Heart left ventricle (tissue), 16 donors: ENCODE measurements at regions of chr18 and their contacts with region 1.

Region 1: DNA sequence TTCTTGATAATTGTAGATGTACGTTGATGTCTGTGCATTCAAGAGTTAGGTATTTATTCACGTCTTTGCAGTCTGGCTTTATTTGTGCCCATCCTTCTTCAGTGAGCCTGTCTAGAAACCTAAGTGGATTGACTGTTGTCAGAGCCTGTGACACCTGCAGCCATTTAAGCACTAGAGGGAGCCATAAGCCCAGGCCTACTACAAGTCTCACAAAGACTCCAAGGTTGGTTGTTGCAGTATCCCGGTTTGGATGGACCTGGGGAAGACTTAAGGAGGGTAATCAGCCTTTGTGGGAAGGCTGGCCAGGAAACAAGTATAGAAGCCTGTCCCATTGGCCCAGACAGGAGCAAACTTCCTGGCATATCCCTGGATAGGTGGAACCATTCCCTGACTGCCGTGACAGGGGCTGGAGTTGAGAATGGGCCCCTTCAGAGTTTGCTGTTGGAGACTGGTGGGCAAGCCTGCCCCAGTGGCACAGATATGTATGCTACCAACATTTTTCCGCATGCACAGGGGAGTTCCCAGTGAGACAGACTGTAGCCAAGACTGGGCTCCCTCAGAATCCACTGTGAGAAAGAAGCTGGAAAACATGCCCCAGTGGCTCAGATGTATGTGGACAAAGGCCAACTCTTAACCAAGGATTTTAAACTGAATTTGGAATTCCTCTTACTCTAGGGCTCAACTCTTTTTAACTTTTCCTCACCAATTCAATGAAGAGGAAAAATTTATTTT is 9.3 kb upstream of the LRRC30 start:
- DNase-seq: peak in 4 of 5 donors; percentile 40 to 49 (median 42)
- ATAC-seq: peak; percentile 64 to 91 (median 90)
- H3K4me3 ChIP-seq: no peak overlapping the region
- H3K27ac ChIP-seq: no peak overlapping the region
- H3K4me1 ChIP-seq: no peaks in the 10 kb centered on the region
- H3K27me3 ChIP-seq: no peaks in the 10 kb centered on the region
- CTCF ChIP-seq: peak; percentile 62 to 79 (median 72)
- POLR2A ChIP-seq: no peak

Region 2: DNA sequence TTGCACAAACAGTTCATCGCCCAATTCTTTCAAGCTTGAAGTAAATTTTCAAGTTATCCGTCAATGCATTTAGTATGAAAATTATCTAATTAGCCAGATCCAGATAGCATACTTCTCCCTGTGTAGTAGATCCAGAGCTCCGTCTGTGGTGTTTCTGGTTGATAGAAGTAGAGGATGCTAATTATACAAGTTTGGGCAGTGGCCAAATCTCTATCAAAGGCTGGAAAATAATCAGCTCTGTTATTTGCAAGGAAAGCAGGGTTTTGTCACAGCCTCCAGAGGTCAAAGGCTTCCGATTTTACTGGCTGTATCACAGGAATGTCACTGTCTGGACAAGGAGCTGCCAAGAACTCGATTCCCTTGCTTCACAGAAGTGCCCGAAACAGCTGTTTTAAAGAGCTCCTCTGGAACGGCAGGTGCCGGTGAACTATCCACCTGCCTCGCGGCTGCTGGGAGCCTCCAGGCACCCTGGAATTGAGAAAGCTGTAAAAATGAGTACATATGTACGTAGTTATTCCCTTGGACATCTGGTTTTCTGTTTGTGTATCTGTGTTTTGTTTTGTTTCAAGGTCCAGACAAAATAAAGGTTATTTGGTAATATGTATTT is 38.0 kb after region 1 on chr18:
- intact Hi-C with region 1: loop called in 1 of 10 experiments (anchors 5 kb)
- DNase-seq: no peak
- ATAC-seq: peak in 3 of 4 donors; percentile 21 to 27 (median 23)
- H3K4me3 ChIP-seq: no peak overlapping the region
- H3K27ac ChIP-seq: peak overlapping the region in 4 of 12 donors; percentile 7 to 46 (median 28)
- H3K4me1 ChIP-seq: peaks cover 0 to 31% (median 12%) of the 10 kb centered on the region in 12 donors
- H3K27me3 ChIP-seq: no peaks in the 10 kb centered on the region
- CTCF ChIP-seq: no peak
- POLR2A ChIP-seq: no peak

Region 3: DNA sequence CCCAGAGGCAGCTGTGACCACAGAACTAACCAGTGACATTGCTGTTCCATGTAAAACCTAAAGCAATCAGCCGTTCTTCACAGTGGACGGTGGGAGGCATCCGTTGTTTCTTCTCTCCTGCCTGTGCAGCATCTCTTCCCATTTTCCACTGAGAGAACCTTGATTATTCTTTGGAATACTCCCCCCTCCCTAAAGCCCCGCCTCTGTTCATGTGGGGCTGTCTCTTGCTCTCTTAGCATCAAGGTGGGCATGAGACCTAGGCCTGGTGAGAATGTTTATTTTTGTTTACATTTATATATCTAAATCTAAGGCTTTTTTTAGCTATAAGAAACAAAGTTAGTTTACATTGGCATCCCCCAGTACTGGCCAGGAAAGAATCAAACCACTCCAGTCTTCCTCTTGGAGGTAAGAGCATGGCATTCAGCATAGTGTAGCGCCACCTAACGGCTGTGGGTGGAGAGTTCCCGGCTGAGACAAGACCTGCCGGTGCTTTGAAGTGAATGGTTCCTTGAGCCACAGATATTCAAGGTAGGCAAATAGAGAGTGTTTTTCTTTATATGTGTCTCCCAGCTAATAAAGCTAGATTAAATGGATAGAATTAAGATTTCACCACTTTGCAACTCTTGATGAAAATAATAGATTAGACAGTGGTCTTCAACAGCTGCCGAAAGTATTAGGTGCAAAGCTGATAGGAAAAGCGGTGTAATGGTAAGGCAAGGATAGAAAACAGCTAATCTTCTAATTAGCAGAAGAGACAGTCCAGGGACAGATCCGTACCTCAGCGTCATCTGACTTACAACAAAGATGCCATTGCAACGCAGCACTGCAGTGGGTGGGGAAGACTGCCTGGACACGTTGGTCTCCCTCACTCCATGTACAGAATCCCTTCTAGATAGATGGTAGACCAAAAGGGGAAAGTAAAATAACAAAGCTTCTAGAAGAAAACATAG is 1168.1 kb after region 1 on chr18:
- intact Hi-C with region 1: loop called in 1 of 10 experiments (anchors 10 kb)
- DNase-seq: peak in 4 of 5 donors; percentile 47 to 67 (median 60)
- ATAC-seq: peak; percentile 81 to 92 (median 84)
- H3K4me3 ChIP-seq: no peak overlapping the region
- H3K27ac ChIP-seq: no peak overlapping the region
- H3K4me1 ChIP-seq: peaks cover 0 to 4% (median 0%) of the 10 kb centered on the region in 12 donors
- H3K27me3 ChIP-seq: no peaks in the 10 kb centered on the region
- CTCF ChIP-seq: peak; percentile 56 to 84 (median 76)
- POLR2A ChIP-seq: no peak